Adrenal gland (tissue), 19 donors: ENCODE measurements at regions of chr3 and their contacts with region 1.

Region 1: DNA sequence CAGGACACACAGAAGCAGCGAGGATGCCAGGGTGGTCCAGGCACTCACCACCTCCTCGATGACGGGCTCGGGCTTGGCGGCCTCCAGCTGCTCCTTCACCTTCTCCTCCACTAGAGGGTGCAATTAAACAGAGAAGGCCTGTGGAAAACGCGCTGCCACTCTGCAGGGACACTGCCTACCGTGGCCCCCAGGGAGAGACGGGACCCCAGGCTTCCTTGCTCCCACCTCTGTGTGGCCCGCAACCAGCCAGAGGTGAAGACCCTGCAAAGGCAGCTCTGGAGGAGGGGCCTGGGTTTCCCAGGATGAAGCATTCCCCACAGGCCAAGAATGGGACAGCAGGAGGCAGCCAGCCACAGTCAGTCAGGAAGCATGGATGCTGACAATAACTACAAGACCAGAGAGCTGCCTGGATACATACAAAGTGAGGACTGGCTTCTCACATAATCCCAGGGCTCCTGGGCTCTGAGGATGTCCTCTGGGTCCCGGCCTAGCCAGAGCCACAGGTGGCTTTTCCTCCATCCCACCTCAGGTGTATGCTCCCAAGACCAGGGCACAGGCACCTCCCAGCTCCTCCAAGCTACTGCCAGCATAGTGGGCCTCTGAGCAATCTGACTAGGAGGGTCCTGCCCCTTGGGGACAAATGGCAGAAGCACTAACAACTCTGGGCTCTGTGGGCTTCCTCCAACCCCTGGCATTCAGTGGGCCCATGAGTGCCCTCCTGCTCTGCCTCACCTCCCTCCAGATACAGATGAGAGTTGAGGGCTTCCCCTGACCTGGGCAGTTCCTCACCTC is 46.2 kb downstream of the PTH1R start:
- DNase-seq: peak in 4 of 7 donors; percentile 43 to 65 (median 59)
- H3K4me3 ChIP-seq: no peak overlapping the region
- H3K27ac ChIP-seq: peak overlapping the region in 1 of 5 donors; percentile 88
- H3K4me1 ChIP-seq: peaks cover 32 to 48% of the 10 kb centered on the region in 2 donors
- H3K27me3 ChIP-seq: no peaks in the 10 kb centered on the region
- CTCF ChIP-seq: peak; percentile 59 to 96 (median 82)
- POLR2A ChIP-seq: no peak

Region 2: GRCh38 chr3:46895204-46895660 is 28.5 kb before region 1 on chr3:
- intact Hi-C with region 1: no loop called
- DNase-seq: peak; percentile 60 to 87 (median 77)
- H3K4me3 ChIP-seq: no peak overlapping the region
- H3K27ac ChIP-seq: no peak overlapping the region
- H3K4me1 ChIP-seq: peaks cover 9 to 24% of the 10 kb centered on the region in 2 donors
- H3K27me3 ChIP-seq: peaks cover 11% of the 10 kb centered on the region
- CTCF ChIP-seq: peak; percentile 81 to 94 (median 86)
- POLR2A ChIP-seq: no peak

Region 3: DNA sequence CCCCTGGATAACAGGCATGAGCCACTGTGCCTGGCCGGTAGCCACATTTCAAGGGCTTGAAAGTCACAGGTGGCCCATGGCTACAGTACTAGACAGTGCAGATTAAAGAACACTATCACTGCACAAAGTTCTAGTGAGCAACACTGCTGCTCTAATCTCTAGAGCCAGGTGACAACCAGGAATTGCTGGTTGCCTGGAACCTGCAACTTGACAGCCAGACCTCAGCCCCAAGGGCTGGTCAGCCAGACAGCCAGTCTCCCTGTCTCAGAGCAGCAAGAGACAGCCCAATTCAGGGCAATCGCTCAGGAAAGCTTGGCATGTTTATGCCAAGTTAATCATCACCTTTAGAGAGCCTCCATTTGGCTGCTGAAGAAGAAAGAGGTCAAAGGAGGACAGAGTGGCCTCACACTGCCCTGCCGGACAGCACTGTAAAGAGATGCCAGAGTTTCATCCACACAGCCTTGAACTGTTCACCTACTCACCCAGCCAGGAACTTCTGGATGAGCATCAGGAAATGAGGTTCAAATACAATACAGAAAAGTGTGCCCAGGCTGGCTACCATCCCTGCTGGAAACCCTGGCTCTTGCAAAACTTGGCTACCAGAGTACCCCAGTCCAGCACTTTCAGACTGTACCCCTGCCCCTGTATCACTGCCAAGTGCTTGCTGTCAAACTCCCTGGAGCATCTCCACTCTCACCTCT is 46.8 kb after region 1 on chr3:
- intact Hi-C with region 1: loop called in 1 of 2 experiments (anchors 5 kb)
- DNase-seq: peak; percentile 60 to 93 (median 85)
- H3K4me3 ChIP-seq: no peak overlapping the region
- H3K27ac ChIP-seq: peak overlapping the region; percentile 36 to 75 (median 53)
- H3K4me1 ChIP-seq: peaks cover 37 to 67% of the 10 kb centered on the region in 2 donors
- H3K27me3 ChIP-seq: no peaks in the 10 kb centered on the region
- CTCF ChIP-seq: no peak
- POLR2A ChIP-seq: peak in 1 of 2 donors; percentile 42

Region 4: GRCh38 chr3:46998121-46998851 is 74.5 kb after region 1 on chr3:
- intact Hi-C with region 1: loop called (anchors 5 kb)
- DNase-seq: peak; percentile 84 to 93 (median 89)
- H3K4me3 ChIP-seq: no peak overlapping the region
- H3K27ac ChIP-seq: no peak overlapping the region
- H3K4me1 ChIP-seq: peaks cover 0 to 8% of the 10 kb centered on the region in 2 donors
- H3K27me3 ChIP-seq: no peaks in the 10 kb centered on the region
- CTCF ChIP-seq: peak; percentile 83 to 93 (median 90)
- POLR2A ChIP-seq: no peak